ENCODE measurements at regions of chr2 and their contacts with region 1.

Region 1: DNA sequence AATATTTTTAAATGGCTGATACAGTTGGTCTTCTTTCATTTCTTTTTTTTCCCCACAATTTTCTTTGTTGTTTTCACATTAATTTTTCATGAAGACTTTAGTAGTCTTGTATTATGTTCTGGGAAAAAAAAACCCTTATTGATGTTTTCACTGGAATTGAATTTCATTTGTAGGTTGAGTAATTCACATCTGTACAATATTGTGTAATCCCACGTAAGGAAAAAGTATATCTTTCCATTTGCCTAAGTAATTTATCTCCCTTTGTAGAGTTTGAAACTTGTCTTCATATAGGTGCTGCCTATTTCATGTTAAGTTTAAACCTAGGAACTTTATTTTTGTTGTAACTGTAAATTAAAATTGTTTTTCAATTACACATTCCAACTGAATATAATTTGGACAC is 2.0 kb downstream of the DNAJC27 start:
- DNase-seq: no peak
- H3K4me3 ChIP-seq: no peak overlapping the region
- H3K27ac ChIP-seq: no peak overlapping the region
- H3K4me1 ChIP-seq: peaks cover 0 to 18% (median 6%) of the 10 kb centered on the region in 4 donors
- H3K27me3 ChIP-seq: no peaks in the 10 kb centered on the region
- CTCF ChIP-seq: no peak

Region 2: DNA sequence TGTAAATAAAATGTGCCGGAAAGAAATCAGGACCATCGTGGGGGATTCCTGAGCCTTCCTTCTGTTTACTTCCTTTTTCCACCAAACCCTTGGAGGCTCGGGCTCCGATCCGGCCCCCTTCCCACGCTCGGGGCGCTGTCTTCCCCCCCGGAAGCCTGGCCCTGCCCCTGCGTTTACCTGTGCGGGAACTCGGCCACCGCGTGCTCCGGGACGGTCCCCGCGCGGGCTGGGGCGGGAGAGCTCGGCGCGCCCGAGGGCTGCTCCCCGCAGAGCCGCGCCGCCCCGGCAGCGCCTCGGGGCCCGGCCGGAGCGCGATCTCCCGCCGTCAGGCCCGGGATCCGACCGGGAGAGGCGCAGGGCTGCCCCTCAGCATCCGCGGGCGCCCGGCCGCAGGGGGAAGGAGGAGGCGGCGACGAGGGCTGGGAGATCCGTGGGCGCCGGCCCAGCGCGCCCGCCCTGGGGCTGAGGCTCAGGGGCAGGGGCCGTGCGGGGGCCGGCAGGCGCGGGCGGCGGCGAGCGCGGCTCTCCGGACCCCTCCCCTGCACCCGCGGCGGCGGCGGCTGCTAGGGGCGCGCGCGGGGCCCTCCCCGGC is 50.2 kb before region 1 on chr2:
- intact Hi-C with region 1: loop called (anchors 5 kb)
- DNase-seq: peak in 1 of 2 donors; percentile 64
- H3K4me3 ChIP-seq: peak overlapping the region; percentile 57 to 72
- H3K27ac ChIP-seq: peak overlapping the region; percentile 65 to 76
- H3K4me1 ChIP-seq: peaks cover 0 to 54% (median 34%) of the 10 kb centered on the region in 4 donors
- H3K27me3 ChIP-seq: no peaks in the 10 kb centered on the region
- CTCF ChIP-seq: no peak

Region 3: GRCh38 chr2:25324905-25325592 is 355.3 kb after region 1 on chr2:
- intact Hi-C with region 1: no loop called
- DNase-seq: peak; percentile 91 to 96
- H3K4me3 ChIP-seq: peak overlapping the region; percentile 19 to 20
- H3K27ac ChIP-seq: peak overlapping the region; percentile 66 to 83
- H3K4me1 ChIP-seq: peaks cover 0 to 39% (median 29%) of the 10 kb centered on the region in 4 donors
- H3K27me3 ChIP-seq: no peaks in the 10 kb centered on the region
- CTCF ChIP-seq: peak in 1 of 2 experiments; percentile 27

Measured in tibial artery (tissue), 4 donors.